Aorta (tissue), 5 donors: ENCODE measurements at regions of chr20 and their contacts with region 1.

Region 1: DNA sequence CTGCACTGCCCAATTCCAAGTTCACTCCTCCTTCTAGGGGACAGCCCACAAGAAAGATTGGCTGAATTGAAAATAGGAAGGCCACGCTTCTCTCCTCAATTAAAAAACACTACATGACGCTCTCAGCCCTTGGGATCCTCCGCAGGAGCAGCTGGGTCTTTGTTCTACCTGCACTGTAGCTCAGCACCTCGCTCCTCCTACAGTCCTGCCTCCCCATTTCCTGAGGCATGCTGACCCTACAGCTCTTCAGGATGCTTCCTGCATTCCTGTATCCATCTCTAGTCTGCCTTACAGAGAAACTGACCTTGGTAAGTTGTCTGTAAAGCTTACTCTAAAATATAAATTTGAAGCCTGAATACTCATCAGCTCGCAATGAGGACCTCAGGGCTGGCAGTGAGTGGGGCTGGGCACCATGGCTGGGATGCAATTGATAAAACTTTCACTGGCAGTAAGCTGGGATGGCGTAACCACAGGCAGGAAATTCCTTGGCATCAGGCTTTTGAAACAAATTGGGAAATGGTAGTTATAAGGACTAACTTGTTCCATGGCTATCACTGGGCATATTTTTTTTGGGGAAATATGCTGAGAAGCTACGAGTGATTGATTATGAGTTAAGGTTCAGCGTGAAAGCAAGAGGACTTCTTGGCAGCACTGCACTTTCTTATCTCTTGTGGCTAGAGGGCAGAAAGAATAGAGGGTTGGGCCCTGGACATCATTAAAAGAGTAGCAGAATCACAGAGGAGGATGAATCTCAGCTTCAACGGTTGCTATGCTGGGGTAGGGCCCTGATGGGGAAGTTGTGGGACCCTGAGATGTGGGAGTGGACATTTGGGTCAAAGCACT is 11.7 kb upstream of the SIRPB1 start:
- DNase-seq: no peak
- ATAC-seq: no peak
- H3K4me3 ChIP-seq: no peak overlapping the region
- H3K27ac ChIP-seq: no peak overlapping the region
- H3K4me1 ChIP-seq: no peaks in the 10 kb centered on the region
- H3K27me3 ChIP-seq: no peaks in the 10 kb centered on the region

Region 2: DNA sequence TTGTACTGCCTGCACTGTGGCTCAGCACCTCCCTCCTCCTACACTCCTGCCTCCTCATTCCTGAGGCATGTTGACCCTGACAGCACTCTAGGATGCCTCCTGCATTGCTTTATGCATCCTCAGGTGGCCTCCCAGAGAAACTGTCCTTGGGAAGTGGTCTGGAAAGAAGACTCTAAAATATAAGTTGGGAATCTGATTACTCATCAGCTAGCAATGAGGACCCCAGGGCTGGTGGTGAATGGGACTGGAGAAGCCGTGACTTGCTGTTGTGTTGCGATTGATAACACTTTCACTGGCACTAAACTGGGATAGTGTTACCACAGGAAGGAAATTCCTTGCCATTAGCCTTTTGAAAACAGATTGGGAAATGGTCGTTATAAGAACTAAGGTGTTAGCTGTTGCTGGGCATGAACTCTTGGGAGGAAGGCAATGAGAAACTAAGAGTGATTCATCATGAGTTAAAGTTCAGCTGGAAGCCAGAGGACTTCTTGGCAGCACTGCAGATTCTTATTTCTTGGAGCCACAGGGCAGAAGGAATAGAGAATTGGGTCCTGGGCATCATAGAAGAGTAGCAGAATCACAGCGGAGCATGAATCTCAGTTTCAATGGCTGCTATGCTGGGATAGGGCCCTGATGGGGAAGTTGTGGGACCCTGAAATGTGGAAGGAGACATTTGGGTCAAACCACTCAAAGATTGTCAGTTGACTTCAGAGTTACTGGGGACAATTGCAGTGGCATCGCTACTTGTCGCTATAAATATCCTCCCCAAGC is 64.0 kb before region 1 on chr20:
- intact Hi-C with region 1: loop called in 1 of 2 experiments (anchors 10 kb)
- DNase-seq: no peak
- ATAC-seq: no peak
- H3K4me3 ChIP-seq: no peak overlapping the region
- H3K27ac ChIP-seq: no peak overlapping the region
- H3K4me1 ChIP-seq: no peaks in the 10 kb centered on the region
- H3K27me3 ChIP-seq: peaks cover 0 to 2% of the 10 kb centered on the region in 2 donors